ENCODE measurements at regions of chr11 and their contacts with region 1.

Region 1: DNA sequence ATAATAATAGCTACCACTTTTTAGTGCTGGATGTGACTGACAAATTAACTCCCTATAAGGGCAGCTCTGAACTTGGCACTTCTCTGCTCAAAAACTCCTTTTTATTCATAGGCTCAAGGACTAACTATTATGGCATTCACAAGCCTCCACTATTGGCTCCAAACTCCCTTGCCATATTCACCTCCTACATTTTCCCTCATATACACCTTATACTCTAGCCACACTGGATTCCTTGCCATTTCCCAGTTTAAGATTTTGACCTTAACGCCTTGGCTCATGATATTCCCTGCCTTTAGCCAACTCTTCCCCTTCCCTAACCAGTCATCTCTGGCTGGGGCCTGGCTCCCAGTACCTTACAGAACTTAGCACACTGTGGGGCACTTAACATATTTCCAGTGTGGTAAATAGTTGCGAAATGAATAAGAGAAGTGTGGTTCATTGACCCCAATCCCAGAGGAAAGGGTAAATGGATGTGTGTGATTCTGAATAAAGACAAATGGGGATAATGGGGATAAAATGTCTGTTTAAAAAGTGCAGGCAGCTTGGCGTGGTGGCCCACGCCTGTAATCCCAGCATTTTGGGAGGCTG is 40.0 kb upstream of the SORL1 start:
- DNase-seq: no peak
- H3K4me3 ChIP-seq: no peak overlapping the region
- H3K4me3 Mint-ChIP-seq: no peak overlapping the region
- H3K27ac ChIP-seq: no peak overlapping the region
- H3K27ac Mint-ChIP-seq: peak overlapping the region in 3 of 7 donors; percentile 27 to 82 (median 78)
- H3K4me1 ChIP-seq: peaks cover 34 to 35% of the 10 kb centered on the region in 2 donors
- H3K4me1 Mint-ChIP-seq: peaks cover 39% of the 10 kb centered on the region
- H3K27me3 ChIP-seq: no peaks in the 10 kb centered on the region
- H3K27me3 Mint-ChIP-seq: peaks cover 0 to 1% (median 0%) of the 10 kb centered on the region in 3 donors
- CTCF ChIP-seq: no peak

Region 2: DNA sequence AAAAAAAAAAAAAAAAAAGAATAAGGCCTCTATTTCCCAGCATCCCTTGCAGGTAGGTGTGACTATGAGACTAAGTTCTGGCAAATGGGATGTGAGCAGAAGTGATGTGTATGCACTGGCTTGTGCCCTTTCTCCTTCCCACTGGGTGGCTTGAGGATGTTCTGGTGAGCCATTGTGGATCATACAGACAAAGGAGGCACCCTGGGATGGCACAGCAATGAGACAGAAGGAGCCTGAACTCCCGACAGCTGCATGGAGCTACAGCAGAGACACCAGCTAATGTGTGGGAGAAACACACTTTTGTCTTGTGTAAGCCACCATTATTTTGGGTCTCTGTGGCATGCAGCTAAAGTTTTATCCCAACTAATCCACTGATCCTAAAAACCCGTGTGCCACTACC is 29.4 kb after region 1 on chr11:
- intact Hi-C with region 1: loop called in 1 of 2 experiments (anchors 2 kb)
- DNase-seq: no peak
- H3K4me3 ChIP-seq: no peak overlapping the region
- H3K4me3 Mint-ChIP-seq: no peak overlapping the region
- H3K27ac ChIP-seq: no peak overlapping the region
- H3K27ac Mint-ChIP-seq: peak overlapping the region in 1 of 7 donors; percentile 23
- H3K4me1 ChIP-seq: peaks cover 34 to 39% of the 10 kb centered on the region in 2 donors
- H3K4me1 Mint-ChIP-seq: peaks cover 38% of the 10 kb centered on the region
- H3K27me3 ChIP-seq: no peaks in the 10 kb centered on the region
- H3K27me3 Mint-ChIP-seq: no peaks in the 10 kb centered on the region
- CTCF ChIP-seq: no peak

Region 3: DNA sequence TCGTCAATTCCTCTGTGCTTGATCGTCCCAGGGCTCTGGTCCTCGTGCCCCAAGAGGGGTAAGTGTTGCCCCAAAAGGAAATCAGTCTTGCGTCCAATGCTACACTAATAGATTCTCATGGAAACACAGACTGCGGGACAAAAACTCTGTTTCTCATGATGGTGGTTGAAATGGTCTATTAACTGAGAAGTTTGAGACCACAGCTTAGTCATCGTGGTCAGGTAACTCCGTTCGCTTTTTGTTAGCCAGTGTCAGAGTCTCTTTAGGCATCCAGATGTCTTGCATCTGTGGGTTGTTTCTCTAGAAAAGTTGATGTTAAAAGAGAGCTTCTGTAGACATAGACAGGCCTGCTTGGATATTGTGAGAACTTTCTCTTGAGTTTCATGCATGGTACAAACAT is 145.3 kb after region 1 on chr11:
- intact Hi-C with region 1: no loop called
- DNase-seq: no peak
- H3K4me3 ChIP-seq: no peak overlapping the region
- H3K4me3 Mint-ChIP-seq: no peak overlapping the region
- H3K27ac ChIP-seq: peak overlapping the region in 1 of 2 donors; percentile 27
- H3K27ac Mint-ChIP-seq: peak overlapping the region in 3 of 7 donors; percentile 41 to 74 (median 70)
- H3K4me1 ChIP-seq: no peaks in the 10 kb centered on the region
- H3K4me1 Mint-ChIP-seq: peaks cover 2% of the 10 kb centered on the region
- H3K27me3 ChIP-seq: no peaks in the 10 kb centered on the region
- H3K27me3 Mint-ChIP-seq: no peaks in the 10 kb centered on the region
- CTCF ChIP-seq: no peak